ENCODE measurements at regions of chr16 and their contacts with region 1.

Region 1: GRCh38 chr16:87853411-87854052 is 15.8 kb downstream of the SLC7A5 start:
- DNase-seq: peak; percentile 86
- H3K4me3 Mint-ChIP-seq: peak overlapping the region; percentile 64
- H3K27ac Mint-ChIP-seq: peak overlapping the region; percentile 83
- H3K4me1 Mint-ChIP-seq: peaks cover 54% of the 10 kb centered on the region
- H3K27me3 Mint-ChIP-seq: no peaks in the 10 kb centered on the region

Region 2: DNA sequence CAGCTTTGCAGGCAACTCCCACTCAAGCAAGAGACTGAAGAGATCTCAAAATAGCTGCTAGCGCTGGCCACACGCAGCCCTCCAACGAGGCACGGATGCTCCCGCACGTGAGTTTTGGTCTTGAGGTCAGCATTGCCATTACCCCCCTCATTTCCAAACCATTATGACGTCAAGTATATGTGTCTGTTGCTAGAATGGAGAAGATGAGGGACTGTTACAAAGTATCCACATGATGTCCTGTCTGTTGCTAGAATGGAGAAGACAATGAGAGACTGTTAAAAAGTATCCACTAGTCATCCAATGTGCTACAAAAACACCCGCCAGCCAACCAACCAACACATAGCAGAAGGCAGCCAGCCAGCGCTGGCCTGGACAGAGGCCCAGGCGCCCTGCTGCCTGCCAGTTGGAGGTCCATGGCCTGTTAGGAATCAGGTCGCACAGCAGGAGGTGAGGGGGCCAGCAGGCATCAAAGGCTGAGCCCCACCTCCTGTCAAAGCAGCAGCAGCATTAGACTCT is 112.6 kb before region 1 on chr16:
- intact Hi-C with region 1: no loop called
- DNase-seq: no peak
- H3K4me3 Mint-ChIP-seq: no peak overlapping the region
- H3K27ac Mint-ChIP-seq: peak overlapping the region; percentile 15
- H3K4me1 Mint-ChIP-seq: peaks cover 1% of the 10 kb centered on the region
- H3K27me3 Mint-ChIP-seq: no peaks in the 10 kb centered on the region

Region 3: DNA sequence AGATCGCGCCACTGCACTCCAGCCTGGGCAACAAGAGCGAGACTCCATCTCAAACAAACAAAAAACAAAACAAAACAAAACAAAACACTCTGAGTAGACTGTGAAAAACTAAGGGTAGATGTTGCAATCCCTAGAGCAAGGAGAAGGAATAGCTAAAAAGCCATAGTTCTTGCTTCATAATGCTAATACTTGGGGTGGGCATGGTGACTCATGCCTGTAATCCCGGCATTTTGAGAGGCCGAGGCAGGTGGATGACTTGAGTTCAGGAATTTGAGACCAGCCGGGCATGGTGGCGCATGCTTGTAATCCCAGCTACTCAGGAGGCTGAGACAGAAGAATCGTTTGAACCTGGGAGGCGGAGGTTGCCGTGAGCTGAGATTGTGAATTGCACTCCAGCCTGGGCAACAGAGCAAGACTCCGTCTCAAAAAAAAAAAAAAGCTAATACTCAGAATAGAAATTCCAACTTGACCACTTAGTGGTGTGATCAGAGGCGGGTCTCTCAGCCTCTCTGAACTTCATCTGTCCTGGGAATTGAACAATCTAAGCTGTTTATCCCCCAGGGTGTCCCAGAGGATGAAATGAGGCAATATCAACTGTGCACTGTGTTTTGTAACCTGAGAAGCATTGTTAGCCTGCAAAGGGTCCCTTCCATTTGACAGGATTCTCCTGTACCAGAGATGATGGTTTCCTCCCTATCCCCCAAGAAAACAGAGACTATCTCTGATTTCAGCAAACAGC is 59.6 kb before region 1 on chr16:
- intact Hi-C with region 1: no loop called
- DNase-seq: no peak
- H3K4me3 Mint-ChIP-seq: no peak overlapping the region
- H3K27ac Mint-ChIP-seq: no peak overlapping the region
- H3K4me1 Mint-ChIP-seq: no peaks in the 10 kb centered on the region
- H3K27me3 Mint-ChIP-seq: no peaks in the 10 kb centered on the region

Region 4: GRCh38 chr16:87864331-87864989 is 10.9 kb after region 1 on chr16:
- intact Hi-C with region 1: loop called (anchors 1 kb)
- DNase-seq: no peak
- H3K4me3 Mint-ChIP-seq: peak overlapping the region; percentile 80
- H3K27ac Mint-ChIP-seq: peak overlapping the region; percentile 76
- H3K4me1 Mint-ChIP-seq: peaks cover 45% of the 10 kb centered on the region
- H3K27me3 Mint-ChIP-seq: no peaks in the 10 kb centered on the region